ENCODE measurements at regions of chr7 and their contacts with region 1.

Region 1: DNA sequence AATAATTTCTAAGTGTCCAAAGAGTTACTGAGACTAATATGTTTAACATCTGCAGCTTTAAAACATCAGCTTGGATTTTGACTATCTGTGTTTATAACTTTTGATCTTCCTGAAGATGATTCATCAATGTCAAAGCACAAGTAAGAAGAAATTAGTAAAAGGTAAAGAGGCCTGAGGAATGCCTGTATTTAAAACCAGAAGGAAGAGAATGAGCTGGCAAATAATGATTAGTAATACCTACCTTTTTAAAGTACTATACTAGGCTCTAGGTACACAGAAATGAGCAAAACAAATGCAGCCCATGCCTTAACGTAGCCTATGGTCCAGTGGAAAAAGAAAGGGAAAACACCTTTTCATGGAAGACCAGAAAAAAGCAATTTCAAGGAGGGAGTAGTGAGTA is 158.0 kb downstream of the KCND2 start:
- DNase-seq: no peak
- H3K4me3 ChIP-seq: no peak overlapping the region
- CTCF ChIP-seq: no peak
- POLR2A ChIP-seq: no peak

Region 2: DNA sequence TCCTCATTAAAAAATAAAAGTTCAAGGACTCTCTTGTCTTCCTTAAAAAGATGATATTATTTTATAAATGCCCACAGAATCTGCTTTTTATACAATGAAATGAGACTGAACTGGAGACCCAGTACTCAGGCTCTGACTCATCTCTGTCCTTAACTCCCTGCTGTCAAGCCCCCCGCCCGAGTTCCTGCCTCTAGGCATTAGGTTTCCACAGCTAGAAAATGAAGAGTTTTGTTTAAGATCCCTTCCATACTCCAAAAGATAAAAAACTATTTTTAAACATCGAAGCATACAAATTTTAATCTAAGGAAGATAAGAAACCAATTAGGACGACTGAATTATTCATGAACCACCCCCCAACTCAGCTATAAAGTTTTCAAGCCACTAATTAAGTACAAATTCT is 1971.2 kb after region 1 on chr7:
- intact Hi-C with region 1: loop called (anchors 5 kb)
- DNase-seq: no peak
- H3K4me3 ChIP-seq: no peak overlapping the region
- CTCF ChIP-seq: no peak
- POLR2A ChIP-seq: no peak

Measured in lower leg skin (tissue), 4 donors.